ENCODE measurements at regions of chrX and their contacts with region 1.

Region 1: GRCh38 chrX:21839334-21840192 is at the start of gene MBTPS2:
- DNase-seq: peak; percentile 85
- H3K4me3 ChIP-seq: peak within 1 kb of the TSS; percentile 42 to 77 (median 64)
- H3K27ac ChIP-seq: peak within 1 kb of the TSS; percentile 71 to 88 (median 81)
- H3K4me1 ChIP-seq: peaks cover 0 to 13% (median 2%) of the 10 kb centered on the region in 4 donors
- H3K27me3 ChIP-seq: no peaks in the 10 kb centered on the region
- CTCF ChIP-seq: peak in 1 of 5 experiments; percentile 14
- EP300 ChIP-seq: no peak
- POLR2A ChIP-seq: peak; percentile 67
- total RNA-seq, gene MBTPS2: 1.8 to 7.8 (median 4.7) TPM

Region 2: GRCh38 chrX:21940356-21940829 is 100.8 kb after region 1 on chrX and contains the start of gene SMS:
- in situ Hi-C with region 1: loop called in 1 of 4 experiments (anchors 25 kb)
- intact Hi-C with region 1: no loop called
- DNase-seq: peak; percentile 81
- H3K4me3 ChIP-seq: peak within 1 kb of the TSS; percentile 35 to 64 (median 60)
- H3K27ac ChIP-seq: peak within 1 kb of the TSS; percentile 85 to 90 (median 87)
- H3K4me1 ChIP-seq: peaks cover 0 to 5% (median 1%) of the 10 kb centered on the region in 4 donors
- H3K27me3 ChIP-seq: no peaks in the 10 kb centered on the region
- CTCF ChIP-seq: no peak
- EP300 ChIP-seq: no peak
- POLR2A ChIP-seq: peak; percentile 39
- total RNA-seq, gene SMS: 32.4 to 95.4 (median 43.8) TPM

Measured in transverse colon (tissue), 4 donors.